Body of pancreas (tissue), 4 donors: ENCODE measurements at regions of chr3 and their contacts with region 1.

Region 1: DNA sequence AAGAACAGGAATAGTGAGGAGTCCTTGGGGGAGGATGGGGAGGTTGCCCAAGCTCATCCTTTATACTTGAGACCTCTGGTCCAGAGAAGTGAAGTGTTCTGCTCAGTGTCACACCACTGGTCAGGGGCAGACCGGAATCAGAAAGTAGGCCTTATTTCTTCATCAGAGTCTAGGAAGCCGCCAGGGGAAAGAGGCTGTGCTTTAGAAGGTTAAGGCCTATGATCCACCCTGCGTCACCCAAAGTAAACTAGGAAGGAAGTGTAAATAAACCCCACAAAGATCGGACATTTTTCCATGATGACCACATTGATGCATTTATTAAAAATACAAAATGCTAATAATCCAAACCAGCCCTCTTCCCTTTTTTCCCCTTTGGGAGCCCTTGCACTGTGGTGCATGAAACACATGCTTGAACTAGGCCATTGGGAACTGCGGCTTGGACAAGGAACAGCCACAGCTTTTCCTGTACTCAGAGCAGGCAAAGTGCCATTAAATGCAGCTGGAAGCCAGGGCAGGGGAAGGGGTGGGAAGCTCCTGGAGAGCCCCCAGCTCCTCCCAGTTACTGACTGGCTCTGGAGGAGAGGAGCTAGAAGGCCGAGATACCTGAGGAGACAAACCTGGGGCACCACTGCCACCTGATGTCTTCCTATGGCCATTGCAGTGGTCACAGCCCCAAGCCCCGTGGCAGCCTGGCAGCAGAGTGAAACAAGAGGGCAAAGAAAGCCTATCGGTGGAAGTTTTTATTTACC is 37.0 kb downstream of the CDC25A start:
- DNase-seq: peak; percentile 83 to 88 (median 86)
- ATAC-seq: peak; percentile 98
- H3K4me3 ChIP-seq: no peak overlapping the region
- H3K27ac ChIP-seq: peak overlapping the region in 1 of 4 donors; percentile 26
- H3K4me1 ChIP-seq: peaks cover 9% of the 10 kb centered on the region
- H3K27me3 ChIP-seq: no peaks in the 10 kb centered on the region
- CTCF ChIP-seq: peak; percentile 76 to 96 (median 93)
- POLR2A ChIP-seq: no peak

Region 2: GRCh38 chr3:47824541-47825473 is 326.4 kb before region 1 on chr3:
- intact Hi-C with region 1: loop called (anchors 10 kb)
- DNase-seq: peak; percentile 76 to 85 (median 80)
- ATAC-seq: peak; percentile 99
- H3K4me3 ChIP-seq: peak overlapping the region; percentile 94
- H3K27ac ChIP-seq: peak overlapping the region; percentile 5 to 79 (median 75)
- H3K4me1 ChIP-seq: peaks cover 21% of the 10 kb centered on the region
- H3K27me3 ChIP-seq: no peaks in the 10 kb centered on the region
- CTCF ChIP-seq: peak; percentile 54 to 98 (median 86)
- POLR2A ChIP-seq: peak; percentile 28 to 60 (median 47)

Region 3: DNA sequence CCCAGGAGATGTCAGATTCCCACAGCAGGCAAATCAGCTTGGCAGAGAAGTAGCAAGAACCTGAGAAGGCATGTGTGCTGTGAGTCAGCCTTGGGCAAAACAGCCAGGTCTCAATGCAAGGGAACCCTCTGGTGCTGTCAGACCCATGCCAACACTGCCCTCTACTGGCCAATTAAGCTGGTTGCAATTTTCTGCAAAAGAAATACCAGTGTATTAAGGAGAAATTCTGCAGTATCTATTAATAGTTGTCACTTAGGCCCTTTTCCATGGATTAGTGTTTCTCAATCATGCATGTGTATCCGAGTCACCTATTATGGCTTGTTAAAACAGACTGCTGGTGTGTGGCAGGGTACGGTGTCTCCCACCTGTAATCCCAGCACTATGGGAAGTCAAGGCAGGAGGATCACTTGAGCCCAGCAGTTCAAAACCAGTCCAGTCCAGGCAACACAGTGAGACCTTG is 161.2 kb before region 1 on chr3:
- intact Hi-C with region 1: loop called (anchors 10 kb)
- DNase-seq: peak; percentile 81 to 92 (median 90)
- ATAC-seq: peak; percentile 98
- H3K4me3 ChIP-seq: no peak overlapping the region
- H3K27ac ChIP-seq: peak overlapping the region in 1 of 4 donors; percentile 32
- H3K4me1 ChIP-seq: peaks cover 14% of the 10 kb centered on the region
- H3K27me3 ChIP-seq: no peaks in the 10 kb centered on the region
- CTCF ChIP-seq: peak; percentile 84 to 97 (median 94)
- POLR2A ChIP-seq: no peak